Prostate gland (tissue), 2 donors: ENCODE measurements at regions of chr9 and their contacts with region 1.

Region 1: GRCh38 chr9:92325269-92325990 is at the starts of genes CENPP and NOL8:
- DNase-seq: peak; percentile 86
- H3K4me3 ChIP-seq: peak within 1 kb of the TSS; percentile 73 to 82
- H3K27ac ChIP-seq: peak within 1 kb of the TSS; percentile 89 to 94
- H3K4me1 ChIP-seq: peaks cover 8% of the 10 kb centered on the region
- H3K27me3 ChIP-seq: no peaks in the 10 kb centered on the region
- CTCF ChIP-seq: no peak
- POLR2A ChIP-seq: peak; percentile 20
- total RNA-seq, gene CENPP: 1.4 to 21.5 TPM
- total RNA-seq, gene NOL8: 23.8 to 26.6 TPM

Region 2: DNA sequence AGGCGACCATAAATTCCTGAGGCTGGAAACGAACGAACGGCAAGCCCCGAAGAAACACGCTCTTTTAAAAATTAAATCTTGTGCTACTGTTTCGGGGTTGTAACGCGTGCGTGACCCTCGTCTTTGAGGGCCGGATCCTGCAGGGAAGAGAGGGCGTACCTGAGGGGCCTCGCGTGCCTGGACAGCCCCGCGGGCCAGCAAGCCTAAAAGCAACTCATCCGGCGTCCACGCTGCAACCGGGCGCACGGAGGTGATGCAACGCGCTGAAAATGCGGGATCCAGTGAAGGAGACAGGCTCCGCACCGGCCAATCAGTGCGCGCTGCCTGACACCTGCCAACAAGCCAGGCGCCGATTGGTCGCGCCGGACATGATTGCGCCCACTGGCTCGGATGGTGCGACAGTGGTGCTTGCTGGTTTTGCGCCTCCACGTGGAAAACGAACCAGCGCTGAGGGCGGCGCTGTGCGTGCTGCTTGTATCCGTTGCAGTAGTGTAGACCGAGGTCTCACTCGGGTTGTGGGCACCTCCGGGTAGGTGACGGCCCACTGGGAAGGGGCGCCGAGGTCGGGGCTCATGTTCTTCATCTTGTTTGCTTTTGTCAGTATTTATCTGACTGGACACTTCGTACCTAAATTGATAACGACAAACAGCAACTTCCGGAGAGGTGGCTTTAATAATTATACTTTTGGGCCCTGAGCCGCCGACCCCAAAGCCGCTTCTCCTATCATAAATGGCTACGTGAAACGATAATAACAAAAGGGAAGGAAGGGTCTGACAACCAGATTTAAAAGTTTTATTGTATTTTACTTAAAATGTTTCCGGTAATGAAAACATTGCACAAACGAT is 31.8 kb before region 1 on chr9 and contains the start of gene IARS1:
- intact Hi-C with region 1: loop called (anchors 5 kb)
- DNase-seq: peak; percentile 99
- H3K4me3 ChIP-seq: peak within 1 kb of the TSS; percentile 50 to 69
- H3K27ac ChIP-seq: peak within 1 kb of the TSS; percentile 19 to 62
- H3K4me1 ChIP-seq: peaks cover 7% of the 10 kb centered on the region
- H3K27me3 ChIP-seq: no peaks in the 10 kb centered on the region
- CTCF ChIP-seq: peak; percentile 14 to 47 (median 39)
- POLR2A ChIP-seq: peak; percentile 71
- total RNA-seq, gene IARS1: 58.3 to 89.2 TPM